ENCODE measurements at regions of chr12 and their contacts with region 1.

Region 1: DNA sequence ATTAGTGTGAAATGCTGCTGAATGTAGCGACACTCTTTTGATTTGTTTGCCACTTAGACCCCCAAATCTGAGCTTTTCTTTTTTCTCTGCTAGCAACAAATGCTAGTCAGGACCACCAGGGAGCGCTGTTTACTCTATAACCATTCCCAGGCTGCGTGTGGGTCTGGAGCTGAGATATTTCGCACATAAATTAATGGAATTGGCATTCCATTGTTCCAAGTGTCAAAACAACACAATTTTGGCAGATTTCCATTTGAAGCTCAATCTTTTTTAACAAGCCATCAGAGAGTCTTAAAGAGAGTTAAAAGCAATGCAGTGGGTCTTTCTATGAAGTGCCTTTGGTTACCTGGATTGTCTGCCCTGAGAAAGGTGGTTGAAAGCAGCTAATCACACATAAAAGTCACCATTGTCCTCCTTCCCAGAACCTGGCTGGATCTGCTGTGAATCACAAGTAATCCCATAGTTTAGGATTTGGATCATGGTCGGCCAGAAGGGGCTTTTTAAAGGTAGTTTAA is 7.4 kb upstream of the TMEM132C start:
- DNase-seq: peak; percentile 15
- ATAC-seq: no peak
- H3K4me3 ChIP-seq: no peak overlapping the region
- H3K4me3 Mint-ChIP-seq: no peak overlapping the region
- H3K27ac ChIP-seq: no peak overlapping the region
- H3K27ac Mint-ChIP-seq: no peak overlapping the region
- H3K4me1 ChIP-seq: no peaks in the 10 kb centered on the region
- H3K4me1 Mint-ChIP-seq: no peaks in the 10 kb centered on the region
- H3K27me3 ChIP-seq: peaks cover 0 to 4% (median 0%) of the 10 kb centered on the region in 4 experiments
- H3K27me3 Mint-ChIP-seq: peaks cover 8% of the 10 kb centered on the region
- CTCF ChIP-seq: peak; percentile 63

Region 2: DNA sequence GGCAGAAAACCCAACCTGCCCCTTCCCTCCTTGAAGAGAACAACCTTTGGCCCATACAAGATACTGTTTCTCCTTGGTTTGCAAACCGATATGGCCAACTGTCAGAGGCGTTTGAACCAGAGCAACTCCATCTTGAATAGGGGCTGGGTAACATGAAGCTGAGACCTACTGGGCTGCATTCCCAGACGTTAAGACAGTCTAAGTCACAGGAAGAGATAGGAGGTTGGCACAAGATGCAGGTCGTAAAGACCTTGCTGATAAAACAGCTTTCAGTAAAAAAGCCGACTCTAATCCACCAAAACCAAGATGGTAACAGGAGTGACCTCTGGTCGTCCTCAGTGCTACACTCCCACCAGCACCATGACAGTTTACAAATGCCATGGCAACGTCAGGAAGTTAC is 35.4 kb before region 1 on chr12:
- CTCF ChIA-PET with region 1: no interaction called
- POLR2A ChIA-PET with region 1: no interaction called
- intact Hi-C with region 1: no loop called
- DNase-seq: no peak
- ATAC-seq: no peak
- H3K4me3 ChIP-seq: no peak overlapping the region
- H3K4me3 Mint-ChIP-seq: no peak overlapping the region
- H3K27ac ChIP-seq: no peak overlapping the region
- H3K27ac Mint-ChIP-seq: no peak overlapping the region
- H3K4me1 ChIP-seq: no peaks in the 10 kb centered on the region
- H3K4me1 Mint-ChIP-seq: no peaks in the 10 kb centered on the region
- H3K27me3 ChIP-seq: no peaks in the 10 kb centered on the region
- H3K27me3 Mint-ChIP-seq: no peaks in the 10 kb centered on the region
- CTCF ChIP-seq: no peak

Region 3: GRCh38 chr12:129911428-129912049 is 1651.9 kb after region 1 on chr12:
- CTCF ChIA-PET with region 1: interaction called, 13 read pairs
- POLR2A ChIA-PET with region 1: no interaction called
- intact Hi-C with region 1: no loop called
- DNase-seq: peak; percentile 46
- ATAC-seq: no peak
- H3K4me3 ChIP-seq: no peak overlapping the region
- H3K4me3 Mint-ChIP-seq: no peak overlapping the region
- H3K27ac ChIP-seq: no peak overlapping the region
- H3K27ac Mint-ChIP-seq: no peak overlapping the region
- H3K4me1 ChIP-seq: no peaks in the 10 kb centered on the region
- H3K4me1 Mint-ChIP-seq: no peaks in the 10 kb centered on the region
- H3K27me3 ChIP-seq: no peaks in the 10 kb centered on the region
- H3K27me3 Mint-ChIP-seq: no peaks in the 10 kb centered on the region
- CTCF ChIP-seq: peak; percentile 80

Measured in B cell (primary cell).